GM12878 (cell line): ENCODE measurements at regions of chr21 and their contacts with region 1.

Region 1: GRCh38 chr21:28118570-28118969 is 874.1 kb downstream of the LTN1 start:
- DNase-seq: no peak
- ATAC-seq: no peak
- H3K4me3 ChIP-seq: no peak overlapping the region
- H3K27ac ChIP-seq: no peak overlapping the region
- H3K4me1 ChIP-seq: no peaks in the 10 kb centered on the region
- H3K27me3 ChIP-seq: no peaks in the 10 kb centered on the region
- CTCF ChIP-seq: no peak
- EP300 ChIP-seq: no peak
- POLR2A ChIP-seq: no peak
- RAD21 ChIP-seq: no peak

Region 2: GRCh38 chr21:28084951-28085350 is 33.6 kb before region 1 on chr21:
- CTCF ChIA-PET with region 1: no interaction called
- POLR2A ChIA-PET with region 1: no interaction called
- RAD21 ChIA-PET with region 1: no interaction called
- SMC1A ChIA-PET with region 1: no interaction called
- in situ Hi-C with region 1: no loop called
- intact Hi-C with region 1: loop called (anchors 1 kb)
- DNase-seq: no peak
- ATAC-seq: no peak
- H3K4me3 ChIP-seq: no peak overlapping the region
- H3K27ac ChIP-seq: no peak overlapping the region
- H3K4me1 ChIP-seq: no peaks in the 10 kb centered on the region
- H3K27me3 ChIP-seq: no peaks in the 10 kb centered on the region
- CTCF ChIP-seq: no peak
- EP300 ChIP-seq: no peak
- POLR2A ChIP-seq: no peak
- RAD21 ChIP-seq: no peak

Region 3: DNA sequence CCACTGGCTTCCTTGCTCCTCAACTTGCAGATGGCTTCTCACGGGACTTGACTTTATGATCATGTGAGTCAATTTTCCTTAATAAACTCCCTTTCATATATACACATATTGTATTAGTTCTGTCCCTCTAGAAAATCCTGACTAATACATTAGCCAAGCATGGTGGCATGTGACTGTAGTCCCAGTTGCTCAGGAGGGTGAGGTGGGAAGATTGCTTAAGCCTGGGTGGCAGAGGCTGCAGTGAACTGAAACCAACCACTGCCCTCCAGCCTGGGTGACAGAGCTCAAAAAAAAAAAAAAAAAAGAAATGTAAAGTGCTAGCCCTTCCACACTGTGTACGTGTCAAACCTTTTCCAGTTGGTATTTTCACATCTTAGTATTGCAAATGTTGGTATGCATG is 17.1 kb after region 1 on chr21:
- CTCF ChIA-PET with region 1: no interaction called
- POLR2A ChIA-PET with region 1: no interaction called
- RAD21 ChIA-PET with region 1: no interaction called
- SMC1A ChIA-PET with region 1: no interaction called
- in situ Hi-C with region 1: no loop called
- intact Hi-C with region 1: no loop called
- DNase-seq: no peak
- ATAC-seq: no peak
- H3K4me3 ChIP-seq: no peak overlapping the region
- H3K27ac ChIP-seq: no peak overlapping the region
- H3K4me1 ChIP-seq: no peaks in the 10 kb centered on the region
- H3K27me3 ChIP-seq: no peaks in the 10 kb centered on the region
- CTCF ChIP-seq: no peak
- EP300 ChIP-seq: no peak
- POLR2A ChIP-seq: no peak
- RAD21 ChIP-seq: no peak

Region 4: DNA sequence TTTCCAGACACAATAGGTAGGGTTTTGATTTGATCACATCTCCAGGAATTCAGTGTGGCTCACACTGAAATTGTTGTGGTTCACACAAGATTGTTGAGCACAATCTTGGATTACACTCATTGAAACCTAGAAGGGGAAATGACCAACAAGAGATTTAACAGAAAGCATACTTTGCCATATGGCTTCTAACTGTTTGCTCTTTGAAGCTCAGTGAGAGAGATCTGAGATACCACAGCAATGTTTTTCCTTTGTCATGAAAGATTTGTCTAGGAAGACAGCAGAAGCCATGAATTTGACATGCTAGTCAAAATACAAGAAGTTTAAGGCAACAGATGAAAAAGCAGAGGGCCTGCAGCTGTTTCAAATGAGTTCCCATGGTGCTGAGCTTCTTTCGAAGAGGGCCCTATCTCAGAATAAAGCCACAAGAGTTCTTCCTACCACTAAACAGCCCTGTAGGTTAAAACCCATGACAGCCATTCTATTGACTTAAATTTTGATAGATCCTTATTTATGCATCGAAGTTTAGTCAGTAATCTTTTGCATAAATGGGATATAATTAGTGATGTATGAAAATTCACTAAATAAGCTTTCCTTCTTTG is 223.7 kb after region 1 on chr21:
- CTCF ChIA-PET with region 1: no interaction called
- POLR2A ChIA-PET with region 1: no interaction called
- RAD21 ChIA-PET with region 1: no interaction called
- SMC1A ChIA-PET with region 1: no interaction called
- in situ Hi-C with region 1: no loop called
- intact Hi-C with region 1: no loop called
- DNase-seq: no peak
- ATAC-seq: no peak
- H3K4me3 ChIP-seq: no peak overlapping the region
- H3K27ac ChIP-seq: no peak overlapping the region
- H3K4me1 ChIP-seq: no peaks in the 10 kb centered on the region
- H3K27me3 ChIP-seq: no peaks in the 10 kb centered on the region
- CTCF ChIP-seq: no peak
- EP300 ChIP-seq: no peak
- POLR2A ChIP-seq: no peak
- RAD21 ChIP-seq: no peak